ENCODE measurements at regions of chr9 and their contacts with region 1.

Region 1: DNA sequence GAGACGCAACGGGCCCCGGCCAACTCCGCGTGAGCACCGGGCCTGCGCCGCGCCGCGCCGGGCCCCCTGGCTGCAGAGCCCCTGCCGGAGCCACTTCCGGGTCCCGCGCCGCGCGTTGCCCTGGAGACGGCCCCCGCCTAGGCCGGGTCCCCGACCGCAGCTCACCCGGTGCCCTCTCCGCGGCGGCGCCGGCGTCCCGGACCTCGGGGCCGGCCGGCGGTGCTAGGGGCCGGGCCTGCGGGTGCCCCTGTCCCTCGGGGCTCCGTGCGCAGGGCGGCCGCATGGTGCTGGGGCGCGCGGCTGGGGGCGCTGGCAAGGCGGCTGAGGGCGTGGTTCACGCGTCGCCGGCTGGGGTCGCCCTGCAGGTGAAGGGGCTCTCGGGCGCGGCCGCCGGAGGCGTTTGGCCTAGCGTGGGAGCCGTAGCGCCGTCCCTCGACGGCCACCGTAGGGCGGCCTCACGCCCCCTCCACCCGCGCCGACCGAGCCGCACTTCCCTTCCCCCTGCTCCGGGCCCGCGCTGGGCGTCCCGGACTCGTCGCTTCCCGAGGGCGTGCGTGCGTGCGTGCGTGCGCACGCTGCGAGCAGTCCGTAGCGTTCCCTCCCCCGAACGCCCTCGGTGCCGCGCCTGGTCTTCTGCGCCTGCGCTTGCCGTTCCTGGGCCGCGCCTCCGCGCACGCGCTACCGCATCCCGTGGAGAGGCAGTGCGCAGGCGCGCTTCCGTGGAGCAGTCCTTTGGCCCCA is at the start of gene TMEM250:
- DNase-seq: peak; percentile 71
- H3K4me3 ChIP-seq: peak within 1 kb of the TSS; percentile 68
- CTCF ChIP-seq: no peak

Region 2: GRCh38 chr9:135797507-135798262 is 320.8 kb before region 1 on chr9:
- CTCF ChIA-PET with region 1: interaction called, 10 read pairs
- POLR2A ChIA-PET with region 1: no interaction called
- DNase-seq: no peak
- H3K4me3 ChIP-seq: no peak overlapping the region
- CTCF ChIP-seq: peak; percentile 85

Region 3: DNA sequence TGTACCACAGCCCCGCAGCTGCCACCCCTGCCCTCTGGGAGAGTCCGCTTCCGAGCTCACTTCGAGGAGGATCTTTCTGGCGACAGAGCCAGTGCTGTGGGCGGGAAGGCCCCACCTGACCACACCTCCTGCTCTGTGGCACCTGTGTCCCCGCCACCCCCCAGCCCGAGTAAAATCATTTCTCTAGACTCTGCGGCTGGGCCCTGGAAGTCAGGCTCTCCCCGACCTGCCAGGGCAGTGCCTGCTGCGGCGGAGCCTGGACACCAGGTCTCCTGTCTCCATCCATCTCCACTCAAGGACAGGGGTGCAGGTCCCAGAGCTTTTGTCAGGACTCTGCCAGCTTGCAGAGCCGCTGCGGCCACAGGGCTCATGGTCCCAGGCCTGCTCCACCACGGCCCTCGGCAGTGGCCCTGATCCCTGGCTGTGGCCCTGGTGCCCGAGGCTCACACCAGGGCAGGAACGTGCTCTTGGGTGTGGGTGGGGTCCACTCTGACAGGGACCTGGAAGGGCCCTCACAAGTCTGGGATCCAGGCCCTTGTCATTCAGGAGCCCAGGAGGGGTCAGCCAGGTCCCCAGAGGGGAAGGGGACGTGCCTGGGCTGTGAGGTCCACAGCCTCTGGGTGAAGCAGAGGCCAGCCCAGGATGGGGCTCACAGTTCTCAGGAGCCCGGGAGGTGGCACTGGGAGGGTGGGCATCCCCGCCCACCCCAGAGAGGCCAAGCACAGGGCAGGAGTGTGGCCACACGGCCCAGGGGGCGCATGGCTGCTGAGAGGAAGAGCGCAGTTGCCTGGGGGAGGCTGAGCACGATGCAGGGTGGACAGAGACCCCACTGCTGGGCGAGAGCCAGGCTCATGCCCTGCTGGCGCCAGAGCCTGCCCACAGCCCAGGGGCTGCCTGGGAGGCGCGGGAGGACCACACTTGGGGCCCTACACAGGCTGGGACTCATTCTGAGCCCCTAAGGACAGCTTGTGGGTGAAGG is 190.1 kb before region 1 on chr9:
- CTCF ChIA-PET with region 1: no interaction called
- POLR2A ChIA-PET with region 1: no interaction called
- DNase-seq: no peak
- H3K4me3 ChIP-seq: no peak overlapping the region
- CTCF ChIP-seq: no peak

Region 4: GRCh38 chr9:135961277-135961705 is 157.2 kb before region 1 on chr9 and contains the start of gene UBAC1:
- CTCF ChIA-PET with region 1: interaction called, 195 read pairs
- POLR2A ChIA-PET with region 1: no interaction called
- DNase-seq: peak; percentile 33
- H3K4me3 ChIP-seq: peak within 1 kb of the TSS; percentile 81
- CTCF ChIP-seq: peak; percentile 63

Region 5: DNA sequence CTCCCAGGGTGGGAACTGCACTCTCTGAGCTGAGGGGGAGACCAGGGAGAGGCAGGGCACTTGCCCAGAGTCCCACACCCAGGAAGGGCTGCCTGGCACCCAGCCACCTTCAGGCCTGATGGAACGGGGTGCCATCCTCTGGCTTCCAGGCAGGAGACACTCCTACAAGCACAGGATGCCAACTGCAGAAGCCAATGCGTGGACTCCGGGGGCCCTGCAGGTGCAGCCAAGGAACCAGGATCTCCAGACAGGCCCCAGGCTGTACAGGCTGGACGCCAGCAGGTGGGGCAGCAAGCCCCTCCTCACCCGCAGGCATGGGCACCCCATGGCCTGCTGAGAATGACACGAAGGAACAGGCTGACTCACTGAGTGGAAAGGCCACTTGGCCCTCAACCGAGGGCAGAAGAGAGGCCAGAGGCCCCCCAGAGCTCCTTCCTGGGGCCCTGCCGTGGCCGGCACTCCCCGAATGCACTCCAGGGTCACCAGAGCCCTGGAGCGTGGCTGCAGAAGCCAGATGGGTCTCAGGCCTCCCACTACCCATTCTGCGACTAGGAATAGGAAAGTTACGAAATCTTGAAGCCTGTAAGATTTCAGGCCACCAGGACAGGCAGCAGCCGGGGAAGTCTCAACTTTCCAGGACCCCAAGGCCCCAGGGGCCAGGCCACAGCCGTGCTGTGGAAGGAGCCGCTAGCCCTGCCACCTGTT is 39.1 kb before region 1 on chr9:
- CTCF ChIA-PET with region 1: interaction called, 15 read pairs
- POLR2A ChIA-PET with region 1: no interaction called
- DNase-seq: no peak
- H3K4me3 ChIP-seq: no peak overlapping the region
- CTCF ChIP-seq: no peak

Region 6: GRCh38 chr9:136093995-136094881 is 24.3 kb before region 1 on chr9:
- CTCF ChIA-PET with region 1: interaction called, 46 read pairs
- POLR2A ChIA-PET with region 1: no interaction called
- DNase-seq: no peak
- H3K4me3 ChIP-seq: peak overlapping the region; percentile 75
- CTCF ChIP-seq: peak; percentile 4

Region 7: DNA sequence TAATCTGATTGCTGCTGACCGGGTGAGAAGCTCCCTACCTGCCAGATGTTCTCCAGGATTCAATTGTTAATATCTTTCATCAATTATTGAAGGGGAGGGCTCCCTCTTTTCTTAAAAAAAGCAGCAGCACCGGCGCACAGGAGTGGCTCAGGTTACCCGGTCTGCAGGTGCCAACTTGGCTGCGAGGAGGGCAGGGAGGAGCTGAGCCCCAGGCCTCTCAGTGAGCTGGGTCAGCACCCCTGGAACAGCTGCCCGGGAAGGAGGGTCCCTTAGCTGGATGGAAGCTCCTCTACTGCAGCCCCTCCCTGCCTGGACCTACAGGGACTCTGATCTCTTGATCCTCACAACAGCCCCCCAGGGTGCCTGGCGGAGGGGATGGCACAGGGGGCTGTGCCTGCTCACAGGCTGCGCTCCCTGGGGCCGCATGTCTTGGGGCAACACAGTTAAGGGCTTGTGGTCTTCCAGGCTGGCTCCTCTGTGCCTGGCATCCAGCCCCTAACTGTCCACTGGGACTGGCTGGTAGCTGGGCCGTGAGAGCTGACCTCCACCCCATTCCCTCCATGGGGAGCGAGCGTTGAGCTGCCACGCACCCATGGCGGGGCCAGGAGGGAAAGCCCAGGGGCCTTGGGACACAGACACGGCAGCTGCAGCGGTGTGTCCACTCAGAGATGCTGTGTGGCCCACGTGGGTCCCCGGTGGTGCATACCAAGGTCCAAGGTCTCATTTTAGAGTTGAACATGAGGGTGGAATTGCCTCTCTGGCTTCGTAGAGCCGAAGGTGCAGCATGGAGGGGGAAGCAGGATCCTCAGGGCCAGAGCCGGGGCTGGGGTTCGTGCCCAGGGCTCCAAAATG is 28.8 kb after region 1 on chr9:
- CTCF ChIA-PET with region 1: no interaction called
- POLR2A ChIA-PET with region 1: no interaction called
- DNase-seq: no peak
- H3K4me3 ChIP-seq: no peak overlapping the region
- CTCF ChIP-seq: no peak